Cardiac septum (tissue), 1 donor: ENCODE measurements at regions of chr1 and their contacts with region 1.

Region 1: DNA sequence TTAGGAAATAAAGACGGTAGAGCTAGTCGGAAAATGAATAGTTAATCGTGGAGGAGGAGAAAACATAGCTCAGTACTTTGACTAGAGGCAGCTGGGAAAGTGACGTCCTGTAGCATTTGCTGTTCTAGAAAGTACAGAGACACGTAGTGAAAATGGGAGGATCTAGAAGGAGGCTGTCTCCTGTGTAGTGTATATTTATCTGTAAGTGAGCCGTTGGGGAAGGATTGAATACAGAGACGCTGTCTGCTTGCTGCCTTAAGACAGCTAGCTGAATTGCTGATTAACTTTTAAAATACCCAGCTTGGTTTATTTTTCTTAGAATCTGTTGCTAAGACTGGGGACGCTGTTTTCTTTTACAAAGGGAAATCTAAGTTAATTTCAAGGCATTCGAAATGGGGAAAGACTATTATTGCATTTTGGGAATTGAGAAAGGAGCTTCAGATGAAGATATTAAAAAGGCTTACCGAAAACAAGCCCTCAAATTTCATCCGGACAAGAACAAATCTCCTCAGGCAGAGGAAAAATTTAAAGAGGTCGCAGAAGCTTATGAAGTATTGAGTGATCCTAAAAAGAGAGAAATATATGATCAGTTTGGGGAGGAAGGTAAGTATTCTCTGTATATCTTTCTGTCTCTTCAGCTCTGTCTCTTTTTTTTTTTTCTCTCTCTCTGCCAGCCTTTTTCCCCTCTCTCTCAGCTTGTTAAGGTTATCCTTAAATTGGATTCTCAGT is at the start of gene DNAJB4:
- DNase-seq: no peak
- total RNA-seq, gene DNAJB4: 140 TPM

Region 2: GRCh38 chr1:77978969-77979876 is 25.7 kb before region 1 on chr1 and contains the start of gene FUBP1:
- intact Hi-C with region 1: loop called (anchors 1 kb)
- DNase-seq: peak; percentile 96
- total RNA-seq, gene FUBP1: 80.0 TPM

Region 3: GRCh38 chr1:78045926-78046778 is 41.3 kb after region 1 on chr1 and contains the start of gene GIPC2:
- intact Hi-C with region 1: loop called (anchors 5 kb)
- DNase-seq: no peak
- total RNA-seq, gene GIPC2: 4.0 TPM

Region 4: GRCh38 chr1:78081980-78082860 is 77.3 kb after region 1 on chr1:
- intact Hi-C with region 1: loop called (anchors 2 kb)
- DNase-seq: no peak

Region 5: GRCh38 chr1:78101514-78101913 is 96.6 kb after region 1 on chr1:
- intact Hi-C with region 1: loop called (anchors 2 kb)
- DNase-seq: no peak